Ascending aorta (tissue), 2 donors: ENCODE measurements at regions of chr1 and their contacts with region 1.

Region 1: GRCh38 chr1:3530926-3531818 is 76.7 kb downstream of the ARHGEF16 start:
- DNase-seq: peak; percentile 33 to 84
- H3K4me3 ChIP-seq: peak overlapping the region; percentile 82 to 83
- H3K27ac ChIP-seq: peak overlapping the region; percentile 88 to 92
- H3K4me1 ChIP-seq: peaks cover 21 to 44% of the 10 kb centered on the region in 2 donors
- H3K27me3 ChIP-seq: no peaks in the 10 kb centered on the region
- CTCF ChIP-seq: no peak

Region 2: GRCh38 chr1:3504151-3504821 is 26.9 kb before region 1 on chr1:
- intact Hi-C with region 1: loop called (anchors 2 kb)
- DNase-seq: peak; percentile 55 to 93
- H3K4me3 ChIP-seq: no peak overlapping the region
- H3K27ac ChIP-seq: peak overlapping the region; percentile 62 to 87
- H3K4me1 ChIP-seq: peaks cover 16 to 19% of the 10 kb centered on the region in 2 donors
- H3K27me3 ChIP-seq: no peaks in the 10 kb centered on the region
- CTCF ChIP-seq: no peak

Region 3: DNA sequence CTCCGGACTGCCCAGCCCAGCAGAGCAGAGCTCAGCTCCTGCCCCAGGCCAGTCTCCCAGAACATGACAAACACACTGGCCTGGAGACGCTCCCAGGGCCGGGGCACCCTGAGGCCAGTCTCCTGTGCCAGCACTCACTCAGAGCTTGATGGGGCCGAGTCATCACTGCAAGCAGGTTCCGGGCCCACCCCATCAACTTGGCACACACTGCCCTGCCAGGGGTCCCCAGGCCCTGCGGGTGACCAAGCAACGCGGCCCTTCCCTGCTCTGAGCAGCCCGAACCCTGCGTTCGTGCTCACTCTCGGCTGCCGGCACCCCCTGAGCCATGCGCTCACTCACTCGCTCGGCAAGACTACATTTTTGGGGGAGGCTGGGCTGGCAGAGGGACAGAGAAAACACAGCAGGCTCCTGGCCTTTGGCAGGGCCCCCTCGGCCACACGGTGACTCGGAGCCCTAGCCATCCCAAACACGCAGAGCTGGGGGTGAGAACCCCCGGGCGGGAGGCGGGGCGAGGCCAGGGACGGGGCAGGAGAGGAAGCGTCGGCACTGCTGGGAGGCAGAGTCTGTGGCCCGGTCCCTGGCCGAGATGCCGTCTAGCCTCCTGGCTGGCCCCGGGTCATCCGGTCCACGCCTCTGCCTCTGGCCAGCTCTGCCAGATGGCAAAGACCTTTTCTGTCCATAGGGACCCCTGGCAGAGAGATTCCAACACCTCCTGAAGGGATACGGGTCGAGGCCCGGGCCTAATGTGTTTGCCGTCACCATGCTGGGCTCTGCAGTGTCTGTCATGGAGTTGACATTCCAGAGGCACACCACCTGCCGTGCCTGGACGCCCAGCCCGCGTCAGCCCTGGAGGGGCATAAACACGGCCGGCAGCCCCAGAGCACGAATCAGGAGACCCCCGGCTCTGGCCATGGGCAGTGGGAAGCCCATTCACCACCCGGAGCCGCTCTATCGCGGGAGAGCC is 12.2 kb after region 1 on chr1:
- intact Hi-C with region 1: loop called (anchors 1 kb)
- DNase-seq: peak; percentile 82 to 97
- H3K4me3 ChIP-seq: peak overlapping the region in 1 of 2 donors; percentile 43
- H3K27ac ChIP-seq: peak overlapping the region; percentile 97 to 98
- H3K4me1 ChIP-seq: peaks cover 52 to 74% of the 10 kb centered on the region in 2 donors
- H3K27me3 ChIP-seq: no peaks in the 10 kb centered on the region
- CTCF ChIP-seq: no peak

Region 4: DNA sequence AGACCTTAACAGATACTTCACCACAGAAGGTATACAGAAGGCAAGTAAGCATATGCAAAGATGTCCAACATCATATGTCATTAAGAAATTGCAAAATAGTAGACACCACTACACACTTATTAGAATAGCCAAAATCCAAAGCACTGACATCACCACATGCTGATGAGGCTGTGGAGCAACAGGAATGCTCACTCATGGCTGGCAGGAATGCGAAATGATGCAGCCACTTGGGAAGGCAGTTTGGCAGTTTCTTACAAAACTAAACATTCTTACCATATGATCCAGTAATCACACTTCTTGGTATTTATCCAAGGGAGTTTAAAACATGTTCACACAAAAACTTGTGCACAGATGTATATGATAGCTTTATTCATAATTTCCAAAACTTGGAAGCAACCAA is 862.0 kb after region 1 on chr1:
- intact Hi-C with region 1: no loop called
- DNase-seq: peak in 1 of 2 donors; percentile 16
- H3K4me3 ChIP-seq: no peak overlapping the region
- H3K27ac ChIP-seq: no peak overlapping the region
- H3K4me1 ChIP-seq: no peaks in the 10 kb centered on the region
- H3K27me3 ChIP-seq: no peaks in the 10 kb centered on the region
- CTCF ChIP-seq: no peak